ENCODE measurements at regions of chr14 and their contacts with region 1.

Region 1: GRCh38 chr14:101876555-101876938 is 87.8 kb upstream of the DYNC1H1 start:
- DNase-seq: peak; percentile 88
- H3K4me3 Mint-ChIP-seq: peak overlapping the region; percentile 82
- H3K27ac Mint-ChIP-seq: peak overlapping the region; percentile 93
- H3K4me1 Mint-ChIP-seq: peaks cover 67% of the 10 kb centered on the region
- H3K27me3 Mint-ChIP-seq: no peaks in the 10 kb centered on the region

Region 2: GRCh38 chr14:101774006-101774795 is 102.3 kb before region 1 on chr14:
- intact Hi-C with region 1: loop called (anchors 5 kb)
- DNase-seq: no peak
- H3K4me3 Mint-ChIP-seq: no peak overlapping the region
- H3K27ac Mint-ChIP-seq: no peak overlapping the region
- H3K4me1 Mint-ChIP-seq: peaks cover 22% of the 10 kb centered on the region
- H3K27me3 Mint-ChIP-seq: peaks cover 2% of the 10 kb centered on the region

Region 3: DNA sequence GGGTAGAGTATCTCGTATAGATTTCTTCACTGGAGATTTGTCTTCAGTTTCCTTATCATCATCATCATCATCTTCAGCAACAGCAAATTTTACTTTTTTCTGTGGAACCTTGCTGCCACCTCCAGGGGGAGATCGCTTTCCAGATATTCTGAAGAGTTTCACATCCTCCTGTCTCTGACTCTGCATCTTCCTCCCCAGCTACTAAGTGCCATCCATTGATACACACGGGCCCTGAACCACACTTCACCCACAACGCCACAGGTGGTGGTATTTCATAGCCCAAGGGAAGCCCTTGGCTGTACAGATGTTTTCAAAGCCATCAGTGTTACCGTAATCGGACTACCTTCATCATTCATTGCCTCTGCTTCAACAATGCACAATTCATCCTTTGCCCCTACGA is 32.9 kb before region 1 on chr14:
- intact Hi-C with region 1: loop called (anchors 5 kb)
- DNase-seq: peak; percentile 84
- H3K4me3 Mint-ChIP-seq: no peak overlapping the region
- H3K27ac Mint-ChIP-seq: peak overlapping the region; percentile 79
- H3K4me1 Mint-ChIP-seq: peaks cover 64% of the 10 kb centered on the region
- H3K27me3 Mint-ChIP-seq: no peaks in the 10 kb centered on the region

Region 4: DNA sequence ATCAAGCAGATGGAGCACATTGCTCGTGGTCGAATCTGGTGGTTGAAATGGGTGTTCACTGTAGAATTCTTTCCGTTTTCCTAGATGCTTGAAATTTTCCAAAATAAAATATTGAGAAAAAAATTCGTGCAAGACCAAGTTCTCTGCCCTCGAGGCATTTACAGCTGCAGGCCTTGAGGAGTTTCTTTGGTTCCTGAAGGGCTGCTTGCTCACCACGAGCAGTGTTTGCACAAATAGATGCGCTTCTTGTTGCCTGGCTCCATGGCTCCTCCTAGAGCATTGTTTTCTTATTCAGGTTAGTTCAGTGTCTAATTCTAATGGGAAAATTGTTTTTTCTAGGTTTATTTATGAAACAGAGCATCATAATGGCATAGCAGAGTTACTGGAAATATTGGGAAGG is 13.4 kb after region 1 on chr14:
- intact Hi-C with region 1: no loop called
- DNase-seq: no peak
- H3K4me3 Mint-ChIP-seq: no peak overlapping the region
- H3K27ac Mint-ChIP-seq: no peak overlapping the region
- H3K4me1 Mint-ChIP-seq: no peaks in the 10 kb centered on the region
- H3K27me3 Mint-ChIP-seq: no peaks in the 10 kb centered on the region

Measured in activated CD4-positive, alpha-beta T cell treated with anti-CD3 and anti-CD28 coated beads, Interleukin-2, amount 10 ng/mL, durations not matched to agents 24 days and 14 days (primary cell).